CD4-positive, alpha-beta memory T cell (primary cell): ENCODE measurements at regions of chr10 and their contacts with region 1.

Region 1: GRCh38 chr10:63421591-63421990 is 44.2 kb downstream of the JMJD1C start:
- DNase-seq: peak; percentile 14 to 40 (median 33)
- H3K4me3 ChIP-seq: no peak overlapping the region
- H3K4me3 Mint-ChIP-seq: peak overlapping the region in 6 of 8 donors; percentile 2 to 79 (median 64)
- H3K27ac ChIP-seq: no peak overlapping the region
- H3K27ac Mint-ChIP-seq: peak overlapping the region; percentile 43 to 85 (median 81)
- H3K4me1 ChIP-seq: peaks cover 20% of the 10 kb centered on the region
- H3K4me1 Mint-ChIP-seq: peaks cover 21 to 32% (median 27%) of the 10 kb centered on the region in 4 donors
- H3K27me3 ChIP-seq: no peaks in the 10 kb centered on the region
- H3K27me3 Mint-ChIP-seq: no peaks in the 10 kb centered on the region

Region 2: DNA sequence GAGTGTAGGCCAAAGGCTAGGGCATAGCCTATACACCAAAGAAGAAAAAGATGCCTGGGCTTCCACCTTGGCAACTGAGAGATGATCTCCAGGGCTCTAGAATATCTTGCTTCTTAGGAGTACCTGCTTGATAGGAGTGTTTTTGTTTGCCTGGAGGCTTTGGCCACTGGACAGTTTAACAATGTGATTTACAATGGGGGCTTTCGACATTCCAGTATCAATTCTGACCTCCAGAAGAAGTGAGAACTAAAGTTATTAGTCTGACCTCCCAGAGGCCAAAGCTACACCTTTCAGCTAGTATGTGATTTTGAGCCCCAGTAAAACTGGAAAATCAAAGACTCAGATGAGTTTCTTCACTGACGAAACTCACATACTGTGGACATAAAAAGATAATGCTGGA is 51.9 kb before region 1 on chr10:
- CTCF ChIA-PET with region 1: no interaction called
- POLR2A ChIA-PET with region 1: no interaction called
- intact Hi-C with region 1: loop called (anchors 1 kb)
- DNase-seq: no peak
- H3K4me3 ChIP-seq: no peak overlapping the region
- H3K4me3 Mint-ChIP-seq: no peak overlapping the region
- H3K27ac ChIP-seq: no peak overlapping the region
- H3K27ac Mint-ChIP-seq: no peak overlapping the region
- H3K4me1 ChIP-seq: no peaks in the 10 kb centered on the region
- H3K4me1 Mint-ChIP-seq: peaks cover 5 to 10% (median 7%) of the 10 kb centered on the region in 4 donors
- H3K27me3 ChIP-seq: no peaks in the 10 kb centered on the region
- H3K27me3 Mint-ChIP-seq: no peaks in the 10 kb centered on the region

Region 3: GRCh38 chr10:63388421-63389031 is 33.1 kb before region 1 on chr10:
- CTCF ChIA-PET with region 1: no interaction called
- POLR2A ChIA-PET with region 1: no interaction called
- intact Hi-C with region 1: loop called (anchors 5 kb)
- DNase-seq: peak in 4 of 5 donors; percentile 44 to 63 (median 53)
- H3K4me3 ChIP-seq: peak overlapping the region; percentile 14 to 31
- H3K4me3 Mint-ChIP-seq: peak overlapping the region; percentile 69 to 92 (median 82)
- H3K27ac ChIP-seq: peak overlapping the region; percentile 23
- H3K27ac Mint-ChIP-seq: peak overlapping the region; percentile 24 to 83 (median 76)
- H3K4me1 ChIP-seq: peaks cover 40% of the 10 kb centered on the region
- H3K4me1 Mint-ChIP-seq: peaks cover 54 to 86% (median 71%) of the 10 kb centered on the region in 4 donors
- H3K27me3 ChIP-seq: no peaks in the 10 kb centered on the region
- H3K27me3 Mint-ChIP-seq: no peaks in the 10 kb centered on the region

Region 4: GRCh38 chr10:63437116-63437949 is 15.7 kb after region 1 on chr10:
- CTCF ChIA-PET with region 1: no interaction called
- POLR2A ChIA-PET with region 1: no interaction called
- intact Hi-C with region 1: loop called (anchors 2 kb)
- DNase-seq: no peak
- H3K4me3 ChIP-seq: no peak overlapping the region
- H3K4me3 Mint-ChIP-seq: no peak overlapping the region
- H3K27ac ChIP-seq: no peak overlapping the region
- H3K27ac Mint-ChIP-seq: no peak overlapping the region
- H3K4me1 ChIP-seq: peaks cover 4% of the 10 kb centered on the region
- H3K4me1 Mint-ChIP-seq: peaks cover 18 to 26% (median 21%) of the 10 kb centered on the region in 4 donors
- H3K27me3 ChIP-seq: no peaks in the 10 kb centered on the region
- H3K27me3 Mint-ChIP-seq: no peaks in the 10 kb centered on the region

Region 5: GRCh38 chr10:63465293-63466143 is 43.9 kb after region 1 on chr10 and contains the start of gene JMJD1C:
- CTCF ChIA-PET with region 1: no interaction called
- POLR2A ChIA-PET with region 1: no interaction called
- intact Hi-C with region 1: loop called (anchors 5 kb)
- DNase-seq: peak; percentile 63 to 70 (median 67)
- H3K4me3 ChIP-seq: peak within 1 kb of the TSS; percentile 58 to 71
- H3K4me3 Mint-ChIP-seq: peak within 1 kb of the TSS; percentile 94 to 98 (median 96)
- H3K27ac ChIP-seq: peak within 1 kb of the TSS; percentile 58
- H3K27ac Mint-ChIP-seq: peak within 1 kb of the TSS; percentile 85 to 94 (median 93)
- H3K4me1 ChIP-seq: peaks cover 16% of the 10 kb centered on the region
- H3K4me1 Mint-ChIP-seq: peaks cover 17 to 31% (median 19%) of the 10 kb centered on the region in 4 donors
- H3K27me3 ChIP-seq: no peaks in the 10 kb centered on the region
- H3K27me3 Mint-ChIP-seq: no peaks in the 10 kb centered on the region
- total RNA-seq, gene JMJD1C: 113 to 115 TPM